ENCODE measurements at regions of chr1 and their contacts with region 1.

Region 1: GRCh38 chr1:39585933-39586332 is 9.3 kb upstream of the PABPC4 start:
- DNase-seq: no peak
- H3K27ac ChIP-seq: no peak overlapping the region
- CTCF ChIP-seq: no peak

Region 2: DNA sequence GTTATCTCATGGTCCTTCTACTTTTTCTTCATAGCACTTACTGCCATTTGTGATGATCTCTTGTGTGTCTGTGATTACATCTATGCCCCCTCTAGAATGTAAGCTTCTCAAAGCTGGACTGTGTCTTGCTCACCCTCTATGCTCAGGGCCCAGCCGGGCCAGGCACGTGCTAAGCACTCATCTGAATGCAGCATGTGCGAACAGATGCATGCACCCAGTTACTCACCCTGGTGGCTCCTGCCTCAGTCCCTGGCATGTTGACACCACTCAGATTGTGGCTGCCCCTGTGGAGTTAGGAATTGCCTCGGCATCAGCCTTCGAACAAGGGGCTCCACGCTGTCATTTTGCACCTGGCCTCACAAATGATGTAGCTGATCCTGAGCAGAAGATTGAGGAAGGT is 10.2 kb after region 1 on chr1:
- CTCF ChIA-PET with region 1: no interaction called
- POLR2A ChIA-PET with region 1: interaction called, 19 read pairs
- DNase-seq: no peak
- H3K27ac ChIP-seq: no peak overlapping the region
- CTCF ChIP-seq: no peak